ENCODE measurements at regions of chr2 and their contacts with region 1.

Region 1: GRCh38 chr2:202450785-202451184 is 74.7 kb downstream of the BMPR2 start:
- DNase-seq: no peak
- ATAC-seq: no peak
- H3K4me3 ChIP-seq: no peak overlapping the region
- H3K4me3 Mint-ChIP-seq: no peak overlapping the region
- H3K27ac ChIP-seq: no peak overlapping the region
- H3K27ac Mint-ChIP-seq: no peak overlapping the region
- H3K4me1 ChIP-seq: no peaks in the 10 kb centered on the region
- H3K4me1 Mint-ChIP-seq: no peaks in the 10 kb centered on the region
- H3K27me3 ChIP-seq: no peaks in the 10 kb centered on the region
- H3K27me3 Mint-ChIP-seq: no peaks in the 10 kb centered on the region
- CTCF ChIP-seq: no peak

Region 2: GRCh38 chr2:202429164-202429980 is 21.4 kb before region 1 on chr2:
- CTCF ChIA-PET with region 1: no interaction called
- POLR2A ChIA-PET with region 1: no interaction called
- intact Hi-C with region 1: loop called (anchors 1 kb)
- DNase-seq: no peak
- ATAC-seq: no peak
- H3K4me3 ChIP-seq: no peak overlapping the region
- H3K4me3 Mint-ChIP-seq: no peak overlapping the region
- H3K27ac ChIP-seq: no peak overlapping the region
- H3K27ac Mint-ChIP-seq: no peak overlapping the region
- H3K4me1 ChIP-seq: no peaks in the 10 kb centered on the region
- H3K4me1 Mint-ChIP-seq: peaks cover 5% of the 10 kb centered on the region
- H3K27me3 ChIP-seq: no peaks in the 10 kb centered on the region
- H3K27me3 Mint-ChIP-seq: no peaks in the 10 kb centered on the region
- CTCF ChIP-seq: no peak